HepG2 (cell line): ENCODE measurements at regions of chr4 and their contacts with region 1.

Region 1: GRCh38 chr4:87939978-87940690 is 35.4 kb upstream of the SPP1 start:
- DNase-seq: no peak
- ATAC-seq: no peak
- H3K4me3 ChIP-seq: no peak overlapping the region
- H3K27ac ChIP-seq: no peak overlapping the region
- H3K4me1 ChIP-seq: peaks cover 28% of the 10 kb centered on the region
- H3K27me3 ChIP-seq: no peaks in the 10 kb centered on the region
- CTCF ChIP-seq: no peak
- EP300 ChIP-seq: no peak
- POLR2A ChIP-seq: no peak
- RAD21 ChIP-seq: no peak

Region 2: DNA sequence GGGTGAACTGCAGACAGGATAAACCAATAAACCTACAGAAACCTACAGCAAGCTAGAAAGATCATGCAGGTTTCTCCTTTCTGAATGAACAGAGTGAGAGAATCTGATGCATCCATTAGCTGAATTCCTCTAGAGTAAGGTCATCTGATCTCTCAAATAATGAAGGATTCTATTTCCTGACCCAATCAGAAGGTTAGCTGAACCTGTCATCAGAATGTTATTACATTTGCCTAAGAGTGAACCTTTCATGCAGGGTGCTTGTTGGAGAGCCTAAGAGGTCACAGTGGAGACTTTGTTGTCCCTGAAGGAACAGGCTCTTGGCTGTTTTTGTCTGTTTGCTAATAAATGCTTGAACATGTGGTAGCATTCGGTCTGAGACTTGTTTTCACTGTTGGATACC is 83.3 kb before region 1 on chr4:
- CTCF ChIA-PET with region 1: no interaction called
- POLR2A ChIA-PET with region 1: no interaction called
- in situ Hi-C with region 1: no loop called
- intact Hi-C with region 1: no loop called
- DNase-seq: peak; percentile 37
- ATAC-seq: no peak
- H3K4me3 ChIP-seq: no peak overlapping the region
- H3K27ac ChIP-seq: no peak overlapping the region
- H3K4me1 ChIP-seq: peaks cover 64% of the 10 kb centered on the region
- H3K27me3 ChIP-seq: no peaks in the 10 kb centered on the region
- CTCF ChIP-seq: no peak
- EP300 ChIP-seq: no peak
- POLR2A ChIP-seq: no peak
- RAD21 ChIP-seq: no peak

Region 3: DNA sequence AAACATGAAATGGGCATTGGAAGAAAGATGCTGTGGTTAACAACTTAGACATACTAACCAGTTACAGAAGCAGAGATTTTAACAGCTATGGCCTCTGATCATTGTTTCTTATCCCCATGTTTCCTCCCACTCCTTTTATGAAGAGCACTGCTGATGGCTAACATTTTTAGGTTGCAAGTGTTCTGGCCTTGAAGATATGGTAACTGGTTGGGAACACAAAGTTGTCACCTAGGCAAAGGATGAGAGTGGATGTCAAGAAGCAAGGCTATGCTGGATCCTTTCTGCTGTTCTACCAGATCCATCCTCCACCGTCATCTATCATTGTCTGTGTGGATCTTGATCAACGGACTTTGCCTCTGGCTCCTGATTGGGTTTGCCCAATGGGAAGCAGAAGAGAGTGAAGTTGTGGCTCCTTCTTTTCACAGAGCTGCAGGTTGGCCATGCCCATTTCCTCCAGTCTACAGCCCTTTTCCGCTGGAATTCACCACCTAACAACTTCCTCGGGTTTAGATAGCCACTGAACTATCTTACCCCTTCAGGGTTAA is 13.5 kb before region 1 on chr4:
- CTCF ChIA-PET with region 1: no interaction called
- POLR2A ChIA-PET with region 1: no interaction called
- in situ Hi-C with region 1: no loop called
- intact Hi-C with region 1: loop called (anchors 2 kb)
- DNase-seq: no peak
- ATAC-seq: no peak
- H3K4me3 ChIP-seq: no peak overlapping the region
- H3K27ac ChIP-seq: no peak overlapping the region
- H3K4me1 ChIP-seq: no peaks in the 10 kb centered on the region
- H3K27me3 ChIP-seq: no peaks in the 10 kb centered on the region
- CTCF ChIP-seq: no peak
- EP300 ChIP-seq: no peak
- POLR2A ChIP-seq: no peak
- RAD21 ChIP-seq: no peak